ENCODE measurements at regions of chr2 and their contacts with region 1.

Region 1: DNA sequence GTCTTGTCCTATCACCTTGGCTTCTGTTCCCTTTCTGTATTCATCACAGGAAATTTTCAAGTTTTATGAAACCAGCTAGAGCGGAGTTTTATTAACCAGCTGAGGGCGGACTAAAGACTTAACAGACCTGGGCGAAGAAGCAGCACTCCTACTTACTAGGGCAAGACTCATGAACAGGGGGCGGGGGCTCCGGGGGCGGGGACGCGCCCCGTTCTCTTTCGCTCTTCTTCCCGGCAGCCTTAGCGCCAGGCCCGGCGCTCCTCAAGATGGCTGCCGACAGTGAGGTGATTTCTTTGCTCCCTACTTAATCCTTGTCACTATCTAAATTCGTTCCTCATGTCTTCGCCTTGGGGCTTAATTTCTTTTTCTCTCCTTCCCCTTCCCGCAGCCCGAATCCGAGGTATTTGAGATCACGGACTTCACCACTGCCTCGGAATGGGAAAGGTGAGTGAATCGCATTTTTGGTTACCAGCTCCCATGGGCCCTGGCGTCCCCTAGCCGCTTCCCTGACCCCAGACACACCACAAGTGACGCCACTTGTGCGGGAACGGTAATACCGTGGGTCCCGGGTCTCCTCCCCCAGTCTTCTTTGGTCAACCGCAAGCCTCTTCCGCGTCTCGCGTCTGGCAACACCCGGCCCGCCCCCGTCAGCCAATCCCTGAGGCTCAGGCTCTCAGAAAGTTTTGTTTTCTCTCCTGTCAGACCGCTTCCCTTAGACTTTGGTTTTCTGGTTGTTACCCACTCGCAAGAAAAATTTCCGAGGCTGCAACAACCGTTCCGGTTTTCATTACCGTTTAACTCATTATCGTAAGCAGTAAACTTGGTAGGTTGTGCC is at the start of gene RAB3GAP1:
- DNase-seq: peak; percentile 79 to 98 (median 89)
- ATAC-seq: peak; percentile 82
- H3K4me3 ChIP-seq: peak within 1 kb of the TSS; percentile 66
- H3K4me3 Mint-ChIP-seq: peak within 1 kb of the TSS; percentile 97
- H3K27ac ChIP-seq: peak within 1 kb of the TSS; percentile 96
- H3K27ac Mint-ChIP-seq: peak within 1 kb of the TSS; percentile 99
- H3K4me1 ChIP-seq: peaks cover 18% of the 10 kb centered on the region
- H3K4me1 Mint-ChIP-seq: peaks cover 38% of the 10 kb centered on the region
- H3K27me3 ChIP-seq: no peaks in the 10 kb centered on the region
- H3K27me3 Mint-ChIP-seq: no peaks in the 10 kb centered on the region
- CTCF ChIP-seq: no peak
- total RNA-seq, gene RAB3GAP1: 35.9 to 37.0 TPM

Region 2: DNA sequence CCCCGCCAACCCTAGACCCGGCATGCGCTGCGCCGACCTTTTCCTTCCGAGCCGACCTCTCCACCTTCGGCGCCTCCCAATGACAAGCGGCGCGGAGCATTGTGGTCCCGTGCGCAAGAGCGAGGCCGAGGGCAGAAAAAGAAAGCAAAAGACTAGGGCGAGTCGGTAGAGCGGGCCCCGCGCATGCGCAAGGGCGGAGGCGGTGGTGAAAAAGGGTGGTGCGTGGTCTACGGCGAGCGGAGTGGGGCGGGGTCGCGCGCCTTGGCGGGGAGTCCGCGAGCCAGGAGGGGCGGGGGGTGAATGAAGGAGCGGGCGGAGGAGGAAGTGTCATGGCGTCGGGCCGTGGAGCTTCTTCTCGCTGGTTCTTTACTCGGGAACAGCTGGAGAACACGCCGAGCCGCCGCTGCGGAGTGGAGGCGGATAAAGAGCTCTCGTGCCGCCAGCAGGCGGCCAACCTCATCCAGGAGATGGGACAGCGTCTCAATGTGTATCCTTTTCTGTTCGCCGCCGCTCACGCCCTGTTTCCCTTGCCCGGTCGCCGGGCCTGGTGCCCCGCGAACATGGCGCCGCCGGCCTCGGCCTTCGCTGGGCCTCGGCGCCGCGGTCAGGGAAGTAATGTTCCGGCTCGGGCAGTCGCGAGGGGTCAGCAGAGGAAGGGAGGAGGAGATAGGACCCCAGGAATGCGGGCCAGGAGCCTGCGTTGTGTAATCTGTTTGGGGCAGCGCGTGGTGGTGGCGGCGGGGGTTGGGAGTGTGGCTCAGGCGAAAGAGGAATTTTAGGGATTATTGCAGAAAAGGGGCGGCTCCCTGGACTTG is 133.5 kb before region 1 on chr2 and contains the start of gene CCNT2:
- CTCF ChIA-PET with region 1: no interaction called
- POLR2A ChIA-PET with region 1: interaction called, 4 read pairs
- intact Hi-C with region 1: loop called (anchors 1 to 2 kb)
- DNase-seq: peak; percentile 98 to 100 (median 99)
- ATAC-seq: peak; percentile 82
- H3K4me3 ChIP-seq: peak within 1 kb of the TSS; percentile 88
- H3K4me3 Mint-ChIP-seq: peak within 1 kb of the TSS; percentile 92
- H3K27ac ChIP-seq: peak within 1 kb of the TSS; percentile 95 to 96
- H3K27ac Mint-ChIP-seq: peak within 1 kb of the TSS; percentile 92
- H3K4me1 ChIP-seq: peaks cover 25% of the 10 kb centered on the region
- H3K4me1 Mint-ChIP-seq: peaks cover 57% of the 10 kb centered on the region
- H3K27me3 ChIP-seq: no peaks in the 10 kb centered on the region
- H3K27me3 Mint-ChIP-seq: no peaks in the 10 kb centered on the region
- CTCF ChIP-seq: no peak
- total RNA-seq, gene CCNT2: 62.1 to 67.5 TPM

Region 3: GRCh38 chr2:134973241-134974138 is 78.8 kb before region 1 on chr2:
- CTCF ChIA-PET with region 1: no interaction called
- POLR2A ChIA-PET with region 1: no interaction called
- intact Hi-C with region 1: no loop called
- DNase-seq: no peak
- ATAC-seq: no peak
- H3K4me3 ChIP-seq: no peak overlapping the region
- H3K4me3 Mint-ChIP-seq: no peak overlapping the region
- H3K27ac ChIP-seq: no peak overlapping the region
- H3K27ac Mint-ChIP-seq: no peak overlapping the region
- H3K4me1 ChIP-seq: no peaks in the 10 kb centered on the region
- H3K4me1 Mint-ChIP-seq: no peaks in the 10 kb centered on the region
- H3K27me3 ChIP-seq: no peaks in the 10 kb centered on the region
- H3K27me3 Mint-ChIP-seq: peaks cover 1% of the 10 kb centered on the region
- CTCF ChIP-seq: no peak

Region 4: GRCh38 chr2:135099802-135100483 is 47.7 kb after region 1 on chr2:
- CTCF ChIA-PET with region 1: interaction called, 3 read pairs
- POLR2A ChIA-PET with region 1: no interaction called
- intact Hi-C with region 1: loop called in 1 of 2 experiments (anchors 5 kb)
- DNase-seq: no peak
- ATAC-seq: no peak
- H3K4me3 ChIP-seq: no peak overlapping the region
- H3K4me3 Mint-ChIP-seq: no peak overlapping the region
- H3K27ac ChIP-seq: no peak overlapping the region
- H3K27ac Mint-ChIP-seq: peak overlapping the region; percentile 49
- H3K4me1 ChIP-seq: no peaks in the 10 kb centered on the region
- H3K4me1 Mint-ChIP-seq: peaks cover 22% of the 10 kb centered on the region
- H3K27me3 ChIP-seq: no peaks in the 10 kb centered on the region
- H3K27me3 Mint-ChIP-seq: no peaks in the 10 kb centered on the region
- CTCF ChIP-seq: no peak

Region 5: GRCh38 chr2:135124924-135125886 is 72.9 kb after region 1 on chr2:
- CTCF ChIA-PET with region 1: no interaction called
- POLR2A ChIA-PET with region 1: no interaction called
- intact Hi-C with region 1: no loop called
- DNase-seq: no peak
- ATAC-seq: no peak
- H3K4me3 ChIP-seq: no peak overlapping the region
- H3K4me3 Mint-ChIP-seq: no peak overlapping the region
- H3K27ac ChIP-seq: no peak overlapping the region
- H3K27ac Mint-ChIP-seq: peak overlapping the region; percentile 13
- H3K4me1 ChIP-seq: no peaks in the 10 kb centered on the region
- H3K4me1 Mint-ChIP-seq: peaks cover 5% of the 10 kb centered on the region
- H3K27me3 ChIP-seq: no peaks in the 10 kb centered on the region
- H3K27me3 Mint-ChIP-seq: no peaks in the 10 kb centered on the region
- CTCF ChIP-seq: no peak

Region 6: DNA sequence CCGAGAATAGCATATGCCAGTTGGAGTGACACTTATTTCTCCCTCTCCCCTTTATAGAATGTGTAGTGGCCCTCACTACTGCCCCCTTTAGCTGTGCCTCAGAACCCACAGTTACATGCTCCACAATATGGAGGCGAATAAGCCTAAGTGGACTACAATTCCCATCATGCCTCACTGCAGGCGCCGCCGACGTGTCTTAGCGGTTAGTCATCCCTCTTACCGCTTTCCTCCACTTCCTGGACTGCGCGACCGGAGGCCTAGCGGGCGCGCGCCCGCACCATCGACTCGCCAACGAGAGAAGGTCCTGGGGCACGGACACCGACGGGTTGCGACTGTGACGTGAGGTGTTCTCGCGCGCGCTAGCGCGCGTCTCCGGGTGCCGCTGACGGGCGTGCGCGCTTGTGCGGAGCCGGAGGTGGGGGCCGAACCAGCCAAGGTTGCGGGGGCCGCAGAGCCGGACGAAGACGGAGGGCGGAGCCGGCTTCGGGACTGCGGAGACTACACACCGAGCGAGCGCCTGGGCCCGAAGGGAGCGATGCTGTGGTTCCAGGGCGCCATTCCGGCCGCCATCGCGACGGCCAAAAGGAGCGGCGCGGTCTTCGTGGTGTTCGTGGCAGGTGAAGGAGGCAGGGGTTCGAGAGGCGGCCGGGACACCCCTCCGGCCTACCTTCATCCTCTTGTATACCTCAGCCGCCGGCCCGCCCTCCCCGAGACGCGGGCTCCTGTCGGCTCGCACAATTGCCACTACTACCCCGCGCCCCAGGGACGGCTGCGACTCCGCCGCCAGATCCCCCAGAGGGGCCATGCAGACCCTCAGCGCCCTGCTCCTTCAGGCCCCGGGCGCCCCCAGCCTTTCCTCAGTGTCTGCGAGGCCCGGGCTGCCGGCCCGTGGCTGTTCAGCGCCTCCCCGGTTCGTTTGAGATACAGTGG is 689.4 kb after region 1 on chr2 and contains the start of gene UBXN4:
- CTCF ChIA-PET with region 1: no interaction called
- POLR2A ChIA-PET with region 1: interaction called, 4 read pairs
- intact Hi-C with region 1: loop called (anchors 2 kb)
- DNase-seq: peak; percentile 86 to 99 (median 93)
- ATAC-seq: peak; percentile 87
- H3K4me3 ChIP-seq: peak within 1 kb of the TSS; percentile 94
- H3K4me3 Mint-ChIP-seq: peak within 1 kb of the TSS; percentile 95
- H3K27ac ChIP-seq: peak within 1 kb of the TSS; percentile 95 to 98
- H3K27ac Mint-ChIP-seq: peak within 1 kb of the TSS; percentile 92
- H3K4me1 ChIP-seq: peaks cover 11% of the 10 kb centered on the region
- H3K4me1 Mint-ChIP-seq: peaks cover 46% of the 10 kb centered on the region
- H3K27me3 ChIP-seq: no peaks in the 10 kb centered on the region
- H3K27me3 Mint-ChIP-seq: no peaks in the 10 kb centered on the region
- CTCF ChIP-seq: peak; percentile 17
- total RNA-seq, gene UBXN4: 143 to 150 TPM

Region 7: GRCh38 chr2:135876066-135876711 is 823.9 kb after region 1 on chr2 and contains the start of gene MCM6:
- CTCF ChIA-PET with region 1: no interaction called
- POLR2A ChIA-PET with region 1: interaction called, 3 read pairs
- intact Hi-C with region 1: loop called in 1 of 2 experiments (anchors 10 kb)
- DNase-seq: peak; percentile 94 to 100 (median 96)
- ATAC-seq: peak; percentile 89
- H3K4me3 ChIP-seq: peak within 1 kb of the TSS; percentile 94
- H3K4me3 Mint-ChIP-seq: peak within 1 kb of the TSS; percentile 97
- H3K27ac ChIP-seq: peak within 1 kb of the TSS; percentile 76 to 83
- H3K27ac Mint-ChIP-seq: peak within 1 kb of the TSS; percentile 99
- H3K4me1 ChIP-seq: peaks cover 19% of the 10 kb centered on the region
- H3K4me1 Mint-ChIP-seq: peaks cover 48% of the 10 kb centered on the region
- H3K27me3 ChIP-seq: no peaks in the 10 kb centered on the region
- H3K27me3 Mint-ChIP-seq: no peaks in the 10 kb centered on the region
- CTCF ChIP-seq: no peak
- total RNA-seq, gene MCM6: 31.5 to 34.4 TPM

Region 8: DNA sequence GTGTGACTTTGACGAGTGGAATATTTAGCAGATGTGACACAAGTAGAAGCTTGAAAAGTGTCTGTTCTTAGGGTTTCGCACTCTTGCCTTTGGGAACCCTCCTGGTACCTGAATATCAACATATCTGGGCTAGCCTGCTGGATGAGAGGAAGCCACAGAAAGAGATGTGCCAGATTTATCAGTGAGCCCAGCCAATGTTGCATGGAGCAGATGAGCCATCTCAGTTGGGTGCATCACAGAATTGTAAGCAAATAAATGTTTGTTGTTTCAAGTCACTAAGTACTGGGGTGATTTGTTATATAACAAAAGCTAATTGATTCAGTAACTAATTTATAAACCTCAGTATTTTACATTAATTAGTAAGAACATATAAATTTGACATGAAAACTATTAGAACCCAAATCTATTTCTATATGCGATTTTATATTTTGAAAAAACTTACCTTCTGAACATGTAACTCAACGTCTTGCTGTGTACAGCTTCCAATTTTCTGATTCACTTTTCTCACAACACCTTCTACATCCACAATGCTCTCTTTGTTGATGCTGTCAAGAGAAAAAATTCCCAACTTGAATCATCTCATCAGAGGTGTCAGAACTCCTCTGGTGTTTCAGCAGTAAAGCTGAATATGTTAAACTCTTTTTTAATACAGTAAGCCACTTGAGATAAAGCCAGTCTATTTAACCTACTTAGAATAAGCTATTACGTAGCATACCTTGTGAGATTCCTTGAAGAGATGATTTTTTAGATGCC is 890.9 kb after region 1 on chr2:
- CTCF ChIA-PET with region 1: no interaction called
- POLR2A ChIA-PET with region 1: no interaction called
- intact Hi-C with region 1: no loop called
- DNase-seq: no peak
- ATAC-seq: no peak
- H3K4me3 ChIP-seq: no peak overlapping the region
- H3K4me3 Mint-ChIP-seq: no peak overlapping the region
- H3K27ac ChIP-seq: no peak overlapping the region
- H3K27ac Mint-ChIP-seq: no peak overlapping the region
- H3K4me1 ChIP-seq: peaks cover 5% of the 10 kb centered on the region
- H3K4me1 Mint-ChIP-seq: peaks cover 55% of the 10 kb centered on the region
- H3K27me3 ChIP-seq: no peaks in the 10 kb centered on the region
- H3K27me3 Mint-ChIP-seq: no peaks in the 10 kb centered on the region
- CTCF ChIP-seq: no peak

Measured in CD4-positive, alpha-beta T cell (primary cell).